ENCODE measurements at regions of chr5 and their contacts with region 1.

Region 1: DNA sequence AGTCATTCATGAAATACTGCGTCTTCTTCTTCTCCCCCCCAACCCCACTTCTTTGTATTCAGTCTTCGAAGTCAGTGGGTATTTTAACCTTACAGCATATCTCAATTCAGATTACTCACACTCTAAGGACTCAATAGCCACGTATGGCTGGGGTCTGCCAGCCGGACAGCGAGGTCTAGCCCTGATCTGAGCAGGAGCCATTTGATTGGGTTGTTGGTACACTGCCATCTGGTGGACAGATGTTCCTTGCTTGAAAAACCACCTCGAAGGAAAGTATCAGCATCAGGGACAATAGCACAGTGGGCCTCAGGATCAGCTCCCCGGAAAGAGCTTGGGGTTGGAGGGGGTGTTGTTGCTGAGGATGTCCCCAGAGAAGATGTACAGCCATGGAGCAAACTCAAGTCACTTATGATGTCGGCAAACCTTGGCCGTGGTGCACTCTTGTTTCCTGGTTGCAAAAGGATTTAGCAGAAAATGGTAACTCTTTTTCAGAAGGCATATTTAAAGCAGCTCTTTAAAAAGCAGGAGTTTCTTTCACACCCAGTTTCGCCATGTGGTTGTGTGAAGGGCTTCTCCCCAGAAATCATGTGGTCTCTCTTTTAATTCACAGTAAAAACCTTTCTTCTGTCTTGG is 31.7 kb upstream of the KCNMB1 start:
- DNase-seq: peak; percentile 68
- ATAC-seq: peak; percentile 93
- H3K4me3 ChIP-seq: no peak overlapping the region
- H3K27ac ChIP-seq: no peak overlapping the region
- H3K4me1 ChIP-seq: no peaks in the 10 kb centered on the region
- H3K27me3 ChIP-seq: peaks cover 15% of the 10 kb centered on the region
- CTCF ChIP-seq: peak; percentile 58 to 82 (median 81)
- POLR2A ChIP-seq: no peak
- RAD21 ChIP-seq: peak; percentile 68

Region 2: GRCh38 chr5:170267431-170268152 is 153.3 kb before region 1 on chr5:
- CTCF ChIA-PET with region 1: interaction called, 4 read pairs
- POLR2A ChIA-PET with region 1: no interaction called
- RAD21 ChIA-PET with region 1: no interaction called
- intact Hi-C with region 1: loop called (anchors 2 kb)
- DNase-seq: peak; percentile 37
- ATAC-seq: peak; percentile 97
- H3K4me3 ChIP-seq: no peak overlapping the region
- H3K27ac ChIP-seq: no peak overlapping the region
- H3K4me1 ChIP-seq: no peaks in the 10 kb centered on the region
- H3K27me3 ChIP-seq: peaks cover 43% of the 10 kb centered on the region
- CTCF ChIP-seq: peak; percentile 82 to 85 (median 84)
- POLR2A ChIP-seq: no peak
- RAD21 ChIP-seq: peak; percentile 56

Region 3: GRCh38 chr5:170273945-170274710 is 146.8 kb before region 1 on chr5:
- CTCF ChIA-PET with region 1: interaction called, 10 read pairs
- POLR2A ChIA-PET with region 1: no interaction called
- RAD21 ChIA-PET with region 1: no interaction called
- intact Hi-C with region 1: loop called (anchors 2 kb)
- DNase-seq: peak; percentile 13
- ATAC-seq: peak; percentile 72; the same call in 1 of the 2 replicates
- H3K4me3 ChIP-seq: no peak overlapping the region
- H3K27ac ChIP-seq: no peak overlapping the region
- H3K4me1 ChIP-seq: no peaks in the 10 kb centered on the region
- H3K27me3 ChIP-seq: peaks cover 16% of the 10 kb centered on the region; the same call in 1 of the 2 replicates
- CTCF ChIP-seq: peak in 2 of 3 experiments; percentile 22 to 43; a peak in 3 of 6 replicates
- POLR2A ChIP-seq: no peak
- RAD21 ChIP-seq: peak; percentile 54

Region 4: DNA sequence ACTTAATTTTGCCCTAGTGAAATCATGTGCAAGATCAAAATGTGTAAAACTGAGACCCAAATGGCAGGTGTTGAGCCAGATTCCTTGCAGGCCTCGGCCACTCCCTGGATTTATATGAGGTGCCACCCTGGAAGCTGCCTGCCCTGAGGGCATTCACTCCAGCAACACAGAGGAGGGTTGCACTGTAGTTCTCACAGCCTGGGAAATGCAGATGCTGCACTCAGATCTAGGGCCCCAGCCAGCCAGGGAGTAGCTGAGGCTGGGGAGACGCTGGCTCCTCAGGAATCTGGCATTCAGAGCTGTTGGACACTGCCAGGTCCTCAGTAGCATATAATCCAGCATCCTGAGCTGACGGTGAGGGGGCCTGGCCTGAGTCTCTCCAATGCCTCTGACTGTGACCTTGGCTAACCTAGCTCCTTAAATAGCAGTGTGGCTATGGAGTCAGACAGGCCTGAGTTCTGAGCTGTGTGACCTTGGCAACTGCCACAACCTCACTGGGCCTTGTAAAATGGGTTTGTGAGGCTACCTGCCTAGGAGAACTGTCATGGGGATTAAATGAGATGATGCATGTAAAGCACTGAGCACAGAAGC is 40.4 kb before region 1 on chr5:
- CTCF ChIA-PET with region 1: no interaction called
- POLR2A ChIA-PET with region 1: no interaction called
- RAD21 ChIA-PET with region 1: no interaction called
- intact Hi-C with region 1: no loop called
- DNase-seq: no peak
- ATAC-seq: no peak
- H3K4me3 ChIP-seq: no peak overlapping the region
- H3K27ac ChIP-seq: no peak overlapping the region
- H3K4me1 ChIP-seq: no peaks in the 10 kb centered on the region
- H3K27me3 ChIP-seq: peaks cover 35% of the 10 kb centered on the region
- CTCF ChIP-seq: no peak
- POLR2A ChIP-seq: no peak
- RAD21 ChIP-seq: no peak

Region 5: DNA sequence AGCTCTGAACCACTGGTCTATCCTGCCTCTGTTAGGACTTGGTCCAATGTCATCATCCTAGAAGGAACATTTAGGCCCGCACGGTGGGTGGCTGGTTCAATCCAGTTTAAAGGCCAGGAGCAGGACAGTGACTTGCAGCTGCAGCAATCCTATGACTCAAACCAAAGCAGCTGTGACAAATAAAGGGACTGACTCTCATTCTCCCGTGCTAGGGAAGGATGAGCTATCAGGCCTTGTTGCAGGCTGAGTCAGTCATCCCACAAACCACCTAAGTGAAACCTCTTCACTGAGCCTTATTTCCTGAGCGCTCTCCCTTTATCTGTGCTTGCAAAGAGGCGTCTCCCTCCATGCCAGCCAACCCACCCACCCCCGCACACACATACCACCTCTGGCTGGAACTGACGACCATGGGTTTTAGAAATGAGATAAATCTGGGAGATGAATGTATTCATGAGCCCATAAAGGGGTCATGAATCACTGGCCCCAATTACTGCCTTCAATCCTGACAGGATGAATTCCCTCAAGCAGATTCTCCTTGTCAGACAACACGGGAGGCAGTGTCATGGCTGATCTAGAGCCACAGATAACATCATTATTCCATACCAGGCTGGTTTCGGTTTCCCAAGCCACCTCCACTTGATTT is 176.3 kb after region 1 on chr5:
- CTCF ChIA-PET with region 1: no interaction called
- POLR2A ChIA-PET with region 1: no interaction called
- RAD21 ChIA-PET with region 1: no interaction called
- intact Hi-C with region 1: no loop called
- DNase-seq: no peak
- ATAC-seq: peak; percentile 42; the same call in 1 of the 2 replicates
- H3K4me3 ChIP-seq: no peak overlapping the region
- H3K27ac ChIP-seq: no peak overlapping the region
- H3K4me1 ChIP-seq: no peaks in the 10 kb centered on the region
- H3K27me3 ChIP-seq: peaks cover 37% of the 10 kb centered on the region
- CTCF ChIP-seq: no peak
- POLR2A ChIP-seq: no peak
- RAD21 ChIP-seq: no peak

Region 6: DNA sequence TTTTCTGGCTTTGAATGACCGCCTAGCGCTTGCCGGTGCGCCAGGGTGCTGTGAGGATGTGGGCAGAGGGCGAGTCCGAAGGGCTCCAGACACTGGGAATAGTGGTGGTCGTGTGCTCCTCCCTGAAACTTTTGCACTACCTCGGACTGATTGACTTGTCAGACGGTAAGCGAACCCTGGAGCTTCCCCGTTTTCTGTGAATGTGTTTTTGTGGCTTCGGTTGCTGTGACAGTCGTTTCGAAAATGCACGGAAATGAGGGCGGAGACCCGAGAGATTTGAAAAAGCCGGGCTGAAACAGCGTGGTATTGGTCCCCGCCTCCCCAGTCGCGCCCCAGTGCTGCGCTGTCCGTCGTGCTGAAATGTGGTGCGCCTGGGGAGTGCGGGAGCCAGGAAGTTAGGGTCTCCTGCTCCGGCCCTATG is 260.1 kb after region 1 on chr5:
- CTCF ChIA-PET with region 1: no interaction called
- POLR2A ChIA-PET with region 1: no interaction called
- RAD21 ChIA-PET with region 1: no interaction called
- intact Hi-C with region 1: no loop called
- DNase-seq: no peak
- ATAC-seq: no peak
- H3K4me3 ChIP-seq: no peak overlapping the region
- H3K27ac ChIP-seq: no peak overlapping the region
- H3K4me1 ChIP-seq: no peaks in the 10 kb centered on the region
- H3K27me3 ChIP-seq: peaks cover 95% of the 10 kb centered on the region
- CTCF ChIP-seq: no peak
- POLR2A ChIP-seq: no peak
- RAD21 ChIP-seq: no peak

Measured in HCT116 (cell line).